ENCODE measurements at regions of chr16 and their contacts with region 1.

Region 1: DNA sequence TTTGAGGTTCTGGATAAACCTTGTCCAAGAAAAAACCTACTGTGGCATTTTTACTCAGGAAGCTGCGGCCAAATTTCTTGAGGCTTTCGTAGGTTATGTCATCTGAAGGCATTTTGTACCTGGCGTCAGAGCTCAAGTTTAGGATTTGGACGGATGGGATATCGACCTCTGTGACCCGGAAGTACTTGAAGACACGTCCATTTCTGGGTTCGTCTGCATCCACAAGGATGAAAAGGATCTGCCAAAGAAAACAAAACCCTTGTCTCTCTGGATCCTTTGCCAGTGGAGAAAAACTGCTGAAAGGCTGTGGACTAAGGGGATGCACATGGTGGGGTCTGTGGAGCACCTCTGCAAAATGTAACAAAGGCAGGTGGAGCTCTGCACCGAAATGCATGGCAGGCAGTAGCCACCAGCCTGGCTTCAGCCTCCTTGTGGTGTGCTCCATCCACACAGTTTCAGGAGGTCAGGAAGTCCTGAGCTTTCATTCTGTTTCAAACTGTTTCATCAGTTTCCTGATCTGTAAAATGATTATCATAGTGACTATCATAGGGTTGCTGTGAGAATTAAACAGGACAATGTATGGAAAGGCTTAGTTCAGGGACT is 17.0 kb upstream of the UMOD start:
- DNase-seq: no peak
- ATAC-seq: no peak

Region 2: GRCh38 chr16:19980632-19981265 is 388.8 kb before region 1 on chr16:
- intact Hi-C with region 1: loop called in 1 of 2 experiments (anchors 5 kb)
- DNase-seq: peak in 1 of 2 donors; percentile 4
- ATAC-seq: peak; percentile 49

Region 3: DNA sequence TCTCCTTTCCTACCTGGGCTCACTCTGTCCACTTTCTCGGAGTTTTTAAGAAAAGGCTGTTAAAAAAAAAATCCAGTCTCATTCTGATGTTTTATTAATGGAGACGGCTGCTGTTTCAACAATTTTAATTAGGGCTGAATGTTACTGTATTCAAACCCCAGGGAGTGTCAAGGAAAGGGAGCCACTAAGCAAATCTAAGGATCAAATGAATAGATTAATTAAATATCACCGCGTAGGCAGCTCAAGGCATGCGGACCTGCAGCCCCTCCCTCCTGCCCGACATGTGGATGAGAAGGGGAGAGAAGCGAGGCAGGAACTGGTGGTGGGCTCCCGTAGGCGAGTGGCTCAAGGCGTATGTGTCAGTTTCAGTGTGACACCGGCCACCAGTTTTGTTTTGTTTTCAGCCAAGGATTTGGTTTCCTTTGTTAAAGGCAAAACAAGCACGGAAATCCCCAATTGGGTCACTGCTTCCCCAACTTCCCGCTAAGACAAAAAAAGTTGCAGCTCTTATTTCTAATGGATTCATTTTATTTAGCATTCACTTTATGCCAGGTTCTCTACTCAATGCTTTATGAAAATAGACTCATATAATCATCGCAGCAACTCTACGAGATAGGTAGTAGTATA is 152.8 kb before region 1 on chr16:
- intact Hi-C with region 1: no loop called
- DNase-seq: no peak
- ATAC-seq: no peak